ENCODE measurements at regions of chr1 and their contacts with region 1.

Region 1: DNA sequence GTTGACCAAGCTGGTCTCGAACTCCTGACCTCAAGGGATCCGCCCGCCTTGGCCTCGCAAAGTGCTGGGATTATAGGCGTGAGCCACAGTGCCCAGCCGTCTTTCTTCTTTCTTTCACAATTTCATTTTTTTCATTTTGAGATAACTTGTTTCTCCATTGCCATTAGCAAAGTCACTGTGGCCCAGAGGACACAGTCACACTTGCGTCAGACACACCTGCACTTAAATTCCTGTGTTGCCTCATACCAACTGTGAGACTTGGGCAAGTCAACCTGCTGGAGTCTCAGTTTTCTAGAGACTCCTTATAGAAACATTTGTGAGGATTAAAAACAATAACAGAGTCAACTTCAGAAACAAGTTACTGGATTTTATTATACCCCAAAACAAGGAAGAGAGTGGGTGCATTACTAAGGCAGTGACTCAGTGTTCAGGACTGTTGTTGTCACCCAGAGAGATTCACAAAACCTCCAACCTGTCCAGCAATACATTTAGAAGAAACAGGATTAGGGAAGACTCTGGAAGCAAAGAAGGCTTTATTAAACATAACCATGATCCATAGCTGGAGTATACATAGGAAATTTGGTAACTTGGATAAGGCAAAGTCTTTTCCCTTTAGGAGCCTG is 2.6 kb downstream of the TEDDM1 start:
- DNase-seq: no peak
- ATAC-seq: no peak
- H3K4me3 ChIP-seq: no peak overlapping the region
- H3K4me3 Mint-ChIP-seq: no peak overlapping the region
- H3K27ac ChIP-seq: no peak overlapping the region
- H3K27ac Mint-ChIP-seq: no peak overlapping the region
- H3K4me1 ChIP-seq: no peaks in the 10 kb centered on the region
- H3K4me1 Mint-ChIP-seq: peaks cover 3% of the 10 kb centered on the region
- H3K27me3 ChIP-seq: peaks cover 0 to 2% of the 10 kb centered on the region in 2 experiments
- H3K27me3 Mint-ChIP-seq: peaks cover 20% of the 10 kb centered on the region
- CTCF ChIP-seq: no peak

Region 2: GRCh38 chr1:182135946-182136345 is 261.9 kb before region 1 on chr1:
- CTCF ChIA-PET with region 1: interaction called, 420 read pairs
- POLR2A ChIA-PET with region 1: no interaction called
- intact Hi-C with region 1: no loop called
- DNase-seq: no peak
- ATAC-seq: no peak
- H3K4me3 ChIP-seq: no peak overlapping the region
- H3K4me3 Mint-ChIP-seq: no peak overlapping the region
- H3K27ac ChIP-seq: no peak overlapping the region
- H3K27ac Mint-ChIP-seq: no peak overlapping the region
- H3K4me1 ChIP-seq: no peaks in the 10 kb centered on the region
- H3K4me1 Mint-ChIP-seq: peaks cover 12% of the 10 kb centered on the region
- H3K27me3 ChIP-seq: no peaks in the 10 kb centered on the region
- H3K27me3 Mint-ChIP-seq: no peaks in the 10 kb centered on the region
- CTCF ChIP-seq: no peak

Region 3: DNA sequence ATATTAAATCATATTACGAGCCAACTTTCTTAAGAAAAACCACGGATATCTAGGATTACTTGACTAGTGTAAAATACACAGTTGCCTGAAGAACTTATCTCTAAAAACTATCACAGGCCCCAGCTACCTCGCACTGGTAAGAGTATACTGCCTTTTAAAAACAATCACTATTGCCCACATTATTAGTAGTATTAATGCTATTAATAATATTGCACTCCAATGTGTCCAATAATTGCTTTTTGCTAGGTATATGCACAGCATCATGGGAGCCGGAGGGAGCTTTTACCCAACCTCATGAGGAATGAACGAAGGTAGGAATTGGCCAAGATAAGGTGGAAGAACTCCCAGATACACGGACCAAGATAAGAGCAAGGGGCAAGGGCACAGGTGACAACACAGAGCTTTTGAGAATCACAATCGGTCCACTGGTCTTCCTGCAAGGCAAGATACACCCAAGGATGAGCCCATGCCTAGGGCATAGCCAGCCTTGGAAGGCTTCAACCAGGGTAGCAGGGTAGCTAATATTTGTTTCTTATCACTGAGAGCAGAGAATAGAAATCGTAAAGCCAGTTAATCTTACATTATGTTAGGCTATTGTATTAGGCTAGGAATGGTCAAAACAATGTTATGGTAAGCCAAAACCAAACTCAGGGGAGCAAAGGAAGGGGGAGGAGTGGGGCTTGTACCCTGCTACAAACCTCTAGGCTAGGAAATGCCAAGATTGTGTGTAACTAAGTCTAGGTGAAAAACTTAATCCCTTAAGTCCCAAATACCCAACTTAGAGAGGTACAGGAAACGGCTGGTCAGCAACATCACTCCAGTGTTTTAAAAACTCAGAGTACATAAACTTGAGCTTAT is 15.7 kb before region 1 on chr1:
- CTCF ChIA-PET with region 1: interaction called, 17 read pairs
- POLR2A ChIA-PET with region 1: no interaction called
- intact Hi-C with region 1: no loop called
- DNase-seq: no peak
- ATAC-seq: no peak
- H3K4me3 ChIP-seq: no peak overlapping the region
- H3K4me3 Mint-ChIP-seq: no peak overlapping the region
- H3K27ac ChIP-seq: no peak overlapping the region
- H3K27ac Mint-ChIP-seq: no peak overlapping the region
- H3K4me1 ChIP-seq: no peaks in the 10 kb centered on the region
- H3K4me1 Mint-ChIP-seq: no peaks in the 10 kb centered on the region
- H3K27me3 ChIP-seq: no peaks in the 10 kb centered on the region
- H3K27me3 Mint-ChIP-seq: no peaks in the 10 kb centered on the region
- CTCF ChIP-seq: no peak

Region 4: GRCh38 chr1:182408435-182409075 is 10.7 kb after region 1 on chr1:
- CTCF ChIA-PET with region 1: interaction called, 17 read pairs
- POLR2A ChIA-PET with region 1: no interaction called
- intact Hi-C with region 1: no loop called
- DNase-seq: no peak
- ATAC-seq: no peak
- H3K4me3 ChIP-seq: no peak overlapping the region
- H3K4me3 Mint-ChIP-seq: no peak overlapping the region
- H3K27ac ChIP-seq: no peak overlapping the region
- H3K27ac Mint-ChIP-seq: no peak overlapping the region
- H3K4me1 ChIP-seq: no peaks in the 10 kb centered on the region
- H3K4me1 Mint-ChIP-seq: no peaks in the 10 kb centered on the region
- H3K27me3 ChIP-seq: no peaks in the 10 kb centered on the region
- H3K27me3 Mint-ChIP-seq: peaks cover 34% of the 10 kb centered on the region
- CTCF ChIP-seq: no peak

Measured in CD8-positive, alpha-beta T cell (primary cell).